Panc1 (cell line): ENCODE measurements at regions of chrX and their contacts with region 1.

Region 1: DNA sequence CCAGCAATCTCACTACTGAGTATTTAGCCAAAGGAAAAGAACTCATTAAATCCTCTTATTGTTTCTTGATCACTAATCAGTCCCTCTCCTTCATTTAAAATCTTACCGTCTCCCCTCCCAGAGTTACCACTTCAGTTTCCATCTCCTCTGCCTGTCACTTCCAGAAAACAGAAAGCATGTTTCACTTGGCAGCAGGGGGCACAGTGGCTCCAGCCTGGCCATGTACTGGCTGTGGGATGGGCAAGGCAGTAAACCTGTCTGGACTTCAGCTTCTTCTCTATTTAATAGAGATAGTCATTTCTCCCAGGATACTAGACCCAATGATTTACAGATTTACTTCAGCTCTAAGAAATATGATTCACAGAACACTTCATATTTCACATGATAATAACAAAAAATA is 63.2 kb downstream of the CD40LG start:
- DNase-seq: no peak
- ATAC-seq: peak; percentile 94
- H3K4me3 ChIP-seq: no peak overlapping the region
- H3K27ac ChIP-seq: no peak overlapping the region
- H3K4me1 ChIP-seq: peaks cover 11% of the 10 kb centered on the region
- H3K27me3 ChIP-seq: no peaks in the 10 kb centered on the region
- CTCF ChIP-seq: peak; percentile 83

Region 2: DNA sequence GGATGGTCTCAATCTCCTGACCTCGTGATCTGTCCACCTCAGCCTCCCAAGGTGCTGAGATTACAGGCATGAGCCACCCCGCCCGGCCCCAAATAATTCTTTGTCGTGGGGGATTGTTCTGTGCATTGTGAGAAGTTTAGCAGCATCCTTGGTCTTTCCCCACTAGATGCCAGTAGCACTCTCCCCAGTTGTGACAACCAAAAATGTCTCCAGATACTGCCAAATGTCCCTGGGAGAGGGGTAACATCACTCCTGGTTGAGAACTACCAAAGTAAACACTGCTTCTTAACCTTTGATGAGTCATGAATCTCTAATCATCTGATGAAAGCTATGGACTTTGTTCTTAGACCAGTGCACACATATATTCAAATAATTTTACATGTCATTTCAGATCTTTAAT is 314.1 kb before region 1 on chrX:
- CTCF ChIA-PET with region 1: no interaction called
- POLR2A ChIA-PET with region 1: no interaction called
- in situ Hi-C with region 1: no loop called
- intact Hi-C with region 1: no loop called
- DNase-seq: no peak
- ATAC-seq: no peak
- H3K4me3 ChIP-seq: no peak overlapping the region
- H3K27ac ChIP-seq: no peak overlapping the region
- H3K4me1 ChIP-seq: no peaks in the 10 kb centered on the region
- H3K27me3 ChIP-seq: peaks cover 4% of the 10 kb centered on the region; the same call in 1 of the 2 replicates
- CTCF ChIP-seq: no peak

Region 3: DNA sequence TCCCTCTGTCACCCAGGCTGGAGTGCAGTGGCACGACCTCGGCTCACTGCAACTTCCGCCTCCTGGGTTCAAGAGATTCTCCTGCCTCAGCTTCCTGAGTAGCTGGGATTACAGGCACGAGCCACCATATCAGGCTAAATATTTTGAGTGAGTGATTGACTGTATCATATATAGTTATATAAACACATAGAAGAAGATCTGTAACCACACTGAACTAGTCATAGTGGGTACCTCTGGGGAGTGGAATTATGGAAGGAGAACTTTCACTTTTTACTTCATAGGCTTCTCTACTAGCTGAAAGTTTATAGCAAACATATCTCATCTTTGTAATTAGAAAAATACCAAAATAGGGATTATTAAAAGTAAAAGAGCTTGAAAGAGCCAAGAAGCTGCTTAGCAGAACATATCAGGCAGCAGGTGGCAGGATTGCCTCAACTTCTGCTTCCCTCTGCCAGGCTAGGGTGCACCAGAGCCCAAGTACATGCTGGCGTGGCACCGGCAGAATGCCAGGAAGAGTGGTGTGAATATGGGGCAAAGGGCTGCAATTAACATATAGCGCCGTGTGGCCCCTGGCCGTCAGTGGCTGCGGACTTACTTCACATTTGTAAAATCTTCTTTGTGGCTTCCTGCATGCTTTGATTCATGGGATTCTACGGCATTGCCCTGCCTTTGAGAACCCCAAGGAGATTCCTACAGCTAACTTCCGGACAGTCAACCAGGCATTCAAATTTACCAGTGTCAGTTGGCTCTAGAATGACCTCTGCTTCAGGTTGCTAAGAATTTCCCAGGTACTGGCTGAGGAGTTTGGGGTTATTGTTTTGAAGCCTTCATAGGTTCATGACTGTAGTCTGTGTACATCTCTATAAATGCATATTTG is 102.6 kb before region 1 on chrX:
- CTCF ChIA-PET with region 1: no interaction called
- POLR2A ChIA-PET with region 1: no interaction called
- in situ Hi-C with region 1: no loop called
- intact Hi-C with region 1: no loop called
- DNase-seq: no peak
- ATAC-seq: peak; percentile 81
- H3K4me3 ChIP-seq: no peak overlapping the region
- H3K27ac ChIP-seq: no peak overlapping the region
- H3K4me1 ChIP-seq: no peaks in the 10 kb centered on the region
- H3K27me3 ChIP-seq: no peaks in the 10 kb centered on the region
- CTCF ChIP-seq: peak; percentile 48

Region 4: GRCh38 chrX:136856551-136856950 is 145.4 kb after region 1 on chrX:
- CTCF ChIA-PET with region 1: no interaction called
- POLR2A ChIA-PET with region 1: no interaction called
- in situ Hi-C with region 1: no loop called
- intact Hi-C with region 1: loop called (anchors 10 kb)
- DNase-seq: no peak
- ATAC-seq: no peak
- H3K4me3 ChIP-seq: no peak overlapping the region
- H3K27ac ChIP-seq: no peak overlapping the region
- H3K4me1 ChIP-seq: no peaks in the 10 kb centered on the region
- H3K27me3 ChIP-seq: no peaks in the 10 kb centered on the region
- CTCF ChIP-seq: no peak

Region 5: DNA sequence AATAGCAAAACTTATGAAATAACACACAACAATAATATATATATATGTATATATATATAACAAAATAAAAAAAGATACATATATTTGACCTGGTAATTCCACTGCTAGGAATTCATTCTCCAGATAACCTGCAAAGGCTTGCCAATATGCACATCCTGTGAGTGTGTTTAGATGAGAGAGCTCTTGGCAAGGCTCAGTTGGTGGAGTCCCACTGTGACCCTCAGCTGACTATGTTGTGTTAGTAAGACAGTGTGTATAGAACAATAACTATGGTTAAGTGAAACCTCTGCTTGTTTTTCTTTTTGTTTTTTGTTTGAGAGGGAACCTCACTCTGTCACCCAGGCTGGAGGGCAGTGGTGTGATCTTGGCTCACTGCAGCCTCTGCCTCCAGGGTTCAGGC is 208.9 kb after region 1 on chrX:
- CTCF ChIA-PET with region 1: no interaction called
- POLR2A ChIA-PET with region 1: no interaction called
- in situ Hi-C with region 1: no loop called
- intact Hi-C with region 1: loop called (anchors 2 kb)
- DNase-seq: no peak
- ATAC-seq: no peak
- H3K4me3 ChIP-seq: no peak overlapping the region
- H3K27ac ChIP-seq: no peak overlapping the region
- H3K4me1 ChIP-seq: no peaks in the 10 kb centered on the region
- H3K27me3 ChIP-seq: no peaks in the 10 kb centered on the region
- CTCF ChIP-seq: no peak

Region 6: DNA sequence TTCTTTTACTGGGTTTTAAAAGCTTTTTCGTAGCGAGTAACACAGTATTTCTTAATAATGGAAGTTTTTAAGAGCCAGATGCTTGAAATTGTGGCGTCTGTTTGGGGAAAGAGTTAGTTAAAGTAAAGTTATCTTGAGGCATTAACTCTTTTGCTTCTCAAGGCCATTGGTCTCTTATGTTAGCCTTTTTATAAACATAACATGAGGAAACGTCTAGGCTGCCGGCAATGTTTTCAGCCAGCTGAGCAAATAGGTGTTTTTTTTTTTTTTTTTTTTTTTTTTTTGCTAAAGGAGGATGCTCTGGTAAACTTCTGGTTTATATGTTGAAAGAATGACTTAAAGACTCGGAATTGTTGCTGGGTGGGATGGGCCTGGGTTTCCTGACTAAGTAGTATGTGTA is 220.5 kb after region 1 on chrX:
- CTCF ChIA-PET with region 1: interaction called, 10 read pairs
- POLR2A ChIA-PET with region 1: no interaction called
- in situ Hi-C with region 1: no loop called
- intact Hi-C with region 1: no loop called
- DNase-seq: no peak
- ATAC-seq: no peak
- H3K4me3 ChIP-seq: no peak overlapping the region
- H3K27ac ChIP-seq: no peak overlapping the region
- H3K4me1 ChIP-seq: no peaks in the 10 kb centered on the region
- H3K27me3 ChIP-seq: no peaks in the 10 kb centered on the region
- CTCF ChIP-seq: no peak